Activated B cell treated with CpG ODN at 0.5 μM for 24 hours (primary cell): ENCODE measurements at regions of chr9 and their contacts with region 1.

Region 1: GRCh38 chr9:92432350-92432749 is 8.1 kb upstream of the OMD start:
- DNase-seq: no peak
- ATAC-seq: no peak
- H3K4me3 Mint-ChIP-seq: no peak overlapping the region
- H3K27ac Mint-ChIP-seq: no peak overlapping the region
- H3K4me1 Mint-ChIP-seq: no peaks in the 10 kb centered on the region
- H3K27me3 Mint-ChIP-seq: no peaks in the 10 kb centered on the region
- CTCF ChIP-seq: no peak

Region 2: GRCh38 chr9:92395617-92396016 is 36.7 kb before region 1 on chr9:
- CTCF ChIA-PET with region 1: no interaction called
- POLR2A ChIA-PET with region 1: no interaction called
- intact Hi-C with region 1: loop called (anchors 5 kb)
- DNase-seq: no peak
- ATAC-seq: no peak
- H3K4me3 Mint-ChIP-seq: no peak overlapping the region
- H3K27ac Mint-ChIP-seq: no peak overlapping the region
- H3K4me1 Mint-ChIP-seq: no peaks in the 10 kb centered on the region
- H3K27me3 Mint-ChIP-seq: no peaks in the 10 kb centered on the region
- CTCF ChIP-seq: no peak

Region 3: GRCh38 chr9:92414566-92414965 is 17.8 kb before region 1 on chr9:
- CTCF ChIA-PET with region 1: no interaction called
- POLR2A ChIA-PET with region 1: no interaction called
- intact Hi-C with region 1: no loop called
- DNase-seq: no peak
- ATAC-seq: no peak
- H3K4me3 Mint-ChIP-seq: no peak overlapping the region
- H3K27ac Mint-ChIP-seq: no peak overlapping the region
- H3K4me1 Mint-ChIP-seq: peaks cover 11% of the 10 kb centered on the region
- H3K27me3 Mint-ChIP-seq: no peaks in the 10 kb centered on the region
- CTCF ChIP-seq: no peak